HAP-1 (cell line): ENCODE measurements at regions of chr19 and their contacts with region 1.

Region 1: GRCh38 chr19:18279516-18280273 is 1.7 kb downstream of the JUND start:
- DNase-seq: peak; percentile 94 to 96
- H3K4me3 ChIP-seq: peak overlapping the region; percentile 92
- H3K4me1 ChIP-seq: peaks cover 15% of the 10 kb centered on the region
- H3K27me3 ChIP-seq: no peaks in the 10 kb centered on the region

Region 2: DNA sequence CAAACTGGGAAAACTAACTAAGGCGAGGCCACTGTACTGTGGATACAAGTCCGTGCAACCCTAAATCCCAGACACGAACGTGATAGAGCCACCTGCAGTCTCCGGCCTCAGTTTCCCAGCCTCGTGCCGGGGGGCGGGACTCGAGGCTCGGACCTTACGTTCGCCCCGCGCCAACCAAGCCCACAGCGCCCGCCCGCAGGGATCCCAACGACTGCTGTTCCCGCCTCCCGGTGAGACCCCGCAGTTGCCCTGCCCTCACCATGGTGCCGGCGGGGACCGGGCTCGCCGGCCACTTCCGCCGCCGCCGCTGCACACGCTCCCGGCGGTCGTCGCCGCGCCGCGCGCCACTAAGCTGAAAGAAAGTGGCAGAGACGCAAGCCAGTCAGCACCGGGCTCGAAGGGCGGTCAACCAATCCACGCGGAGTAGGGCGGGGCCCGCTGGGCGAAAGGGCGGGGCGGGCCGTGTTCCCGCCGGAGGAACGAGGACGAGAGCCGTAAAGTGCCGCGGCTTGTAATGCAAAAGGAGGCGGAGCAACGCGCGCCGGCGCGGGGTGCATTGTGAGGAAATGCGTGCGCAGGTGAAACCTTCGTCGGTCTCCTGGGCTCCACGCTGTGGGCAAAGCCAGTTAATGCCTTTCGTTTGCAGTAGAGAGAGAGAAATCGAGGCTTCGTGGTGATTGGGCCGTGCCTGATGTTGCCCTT is 43.2 kb after region 1 on chr19 and contains the start of gene LSM4:
- in situ Hi-C with region 1: loop called (anchors 5 kb)
- DNase-seq: peak; percentile 98 to 99
- H3K4me3 ChIP-seq: peak within 1 kb of the TSS; percentile 90
- H3K4me1 ChIP-seq: peaks cover 12% of the 10 kb centered on the region
- H3K27me3 ChIP-seq: no peaks in the 10 kb centered on the region

Region 3: GRCh38 chr19:18397242-18398202 is 117.8 kb after region 1 on chr19 and contains the start of gene LRRC25:
- in situ Hi-C with region 1: no loop called
- DNase-seq: peak in 1 of 2 experiments; percentile 71
- H3K4me3 ChIP-seq: no peak within 1 kb of the TSS; the same call in 1 of the 2 replicates
- H3K4me1 ChIP-seq: 0 out of 2 replicates have a peak, but pooled peaks cover 6% of the 10 kb centered on the region
- H3K27me3 ChIP-seq: no peaks in the 10 kb centered on the region; the same call in none of the 2 replicates